MCF 10A (cell line): ENCODE measurements at regions of chr1 and their contacts with region 1.

Region 1: DNA sequence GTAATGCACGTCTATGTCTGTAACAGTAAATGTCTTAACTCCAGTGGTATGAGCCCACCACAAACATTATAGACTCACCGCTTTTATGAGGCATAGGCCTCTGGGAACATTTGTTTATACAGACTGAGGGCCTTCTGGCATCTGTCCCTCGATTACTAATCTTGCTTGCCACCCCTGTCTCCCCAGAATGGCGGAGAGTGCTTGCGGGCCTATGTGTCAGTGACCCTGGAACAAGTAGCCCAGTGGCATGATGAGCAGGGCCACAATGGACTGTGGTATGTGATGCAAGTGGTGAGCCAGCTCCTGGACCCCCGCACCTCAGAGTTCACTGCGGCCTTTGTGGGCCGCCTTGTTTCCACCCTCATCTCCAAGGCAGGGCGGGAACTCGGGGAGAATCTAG is 18.3 kb upstream of the SHISA4 start:
- DNase-seq: no peak
- H3K4me3 Mint-ChIP-seq: no peak overlapping the region
- H3K27ac Mint-ChIP-seq: no peak overlapping the region
- H3K4me1 Mint-ChIP-seq: no peaks in the 10 kb centered on the region
- H3K27me3 Mint-ChIP-seq: no peaks in the 10 kb centered on the region
- CTCF ChIP-seq: no peak

Region 2: GRCh38 chr1:201850053-201850397 is 20.4 kb before region 1 on chr1:
- CTCF ChIA-PET with region 1: interaction called, 4 read pairs
- POLR2A ChIA-PET with region 1: interaction called, 15 read pairs
- intact Hi-C with region 1: no loop called
- DNase-seq: peak; percentile 51
- H3K4me3 Mint-ChIP-seq: no peak overlapping the region
- H3K27ac Mint-ChIP-seq: peak overlapping the region; percentile 58
- H3K4me1 Mint-ChIP-seq: peaks cover 41% of the 10 kb centered on the region
- H3K27me3 Mint-ChIP-seq: no peaks in the 10 kb centered on the region
- CTCF ChIP-seq: no peak

Region 3: GRCh38 chr1:201859424-201859823 is 11.0 kb before region 1 on chr1:
- CTCF ChIA-PET with region 1: interaction called, 10 read pairs
- POLR2A ChIA-PET with region 1: interaction called, 6 read pairs
- intact Hi-C with region 1: no loop called
- DNase-seq: peak; percentile 63
- H3K4me3 Mint-ChIP-seq: no peak overlapping the region
- H3K27ac Mint-ChIP-seq: no peak overlapping the region
- H3K4me1 Mint-ChIP-seq: peaks cover 12% of the 10 kb centered on the region
- H3K27me3 Mint-ChIP-seq: no peaks in the 10 kb centered on the region
- CTCF ChIP-seq: no peak

Region 4: DNA sequence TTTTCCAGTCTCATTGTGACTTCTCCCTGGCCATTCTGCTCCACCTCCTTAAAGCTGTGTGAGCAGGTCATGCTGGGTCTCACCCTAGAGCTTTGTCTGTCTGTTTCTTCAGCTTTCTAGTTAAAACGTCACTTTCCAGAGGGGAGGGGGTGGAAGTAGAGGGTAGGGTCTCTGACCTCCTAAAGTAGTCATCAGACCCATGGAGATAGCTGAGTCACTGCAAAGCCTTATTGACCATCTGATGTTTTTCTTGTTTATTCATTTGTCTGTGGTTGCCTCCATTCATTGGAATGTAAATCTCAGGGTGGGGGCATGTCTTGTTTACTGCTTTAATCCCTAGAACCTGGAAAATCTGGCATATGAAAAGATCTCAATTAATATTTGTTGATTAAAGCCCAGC is 192.7 kb after region 1 on chr1:
- CTCF ChIA-PET with region 1: no interaction called
- POLR2A ChIA-PET with region 1: no interaction called
- intact Hi-C with region 1: no loop called
- DNase-seq: no peak
- H3K4me3 Mint-ChIP-seq: no peak overlapping the region
- H3K27ac Mint-ChIP-seq: no peak overlapping the region
- H3K4me1 Mint-ChIP-seq: peaks cover 14% of the 10 kb centered on the region
- H3K27me3 Mint-ChIP-seq: no peaks in the 10 kb centered on the region
- CTCF ChIP-seq: no peak